Activated naive CD4-positive, alpha-beta T cell treated with anti-CD3 and anti-CD28 coated beads for 36 hours (primary cell): ENCODE measurements at regions of chr3 and their contacts with region 1.

Region 1: GRCh38 chr3:47420511-47421484 is 40.0 kb downstream of the PTPN23 start:
- DNase-seq: peak; percentile 98
- H3K4me3 Mint-ChIP-seq: peak overlapping the region; percentile 52
- H3K27ac Mint-ChIP-seq: peak overlapping the region; percentile 98
- H3K4me1 Mint-ChIP-seq: peaks cover 12% of the 10 kb centered on the region
- H3K27me3 Mint-ChIP-seq: no peaks in the 10 kb centered on the region

Region 2: GRCh38 chr3:46778101-46778500 is 642.7 kb before region 1 on chr3:
- CTCF ChIA-PET with region 1: no interaction called
- intact Hi-C with region 1: no loop called
- DNase-seq: no peak
- H3K4me3 Mint-ChIP-seq: no peak overlapping the region
- H3K27ac Mint-ChIP-seq: no peak overlapping the region
- H3K4me1 Mint-ChIP-seq: no peaks in the 10 kb centered on the region
- H3K27me3 Mint-ChIP-seq: peaks cover 3% of the 10 kb centered on the region

Region 3: DNA sequence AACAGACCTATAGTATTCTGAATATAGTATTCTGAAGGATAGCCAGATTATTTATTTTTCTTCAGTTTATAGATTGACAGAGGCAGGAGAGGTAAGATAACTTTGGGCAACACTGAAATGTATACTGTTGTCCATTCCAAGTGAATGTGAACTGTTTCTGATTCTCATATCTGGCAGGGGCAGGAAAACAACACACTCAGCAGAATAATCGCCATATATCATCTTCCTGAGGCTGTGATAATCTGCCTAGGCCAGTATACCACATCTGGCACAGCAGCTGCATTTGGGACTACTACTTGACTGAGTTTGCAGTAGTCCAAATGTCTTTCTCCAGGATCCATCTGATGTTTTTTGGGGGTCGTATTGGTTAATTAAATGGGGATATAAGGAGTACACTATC is 234.5 kb before region 1 on chr3:
- CTCF ChIA-PET with region 1: no interaction called
- intact Hi-C with region 1: no loop called
- DNase-seq: no peak
- H3K4me3 Mint-ChIP-seq: no peak overlapping the region
- H3K27ac Mint-ChIP-seq: no peak overlapping the region
- H3K4me1 Mint-ChIP-seq: no peaks in the 10 kb centered on the region
- H3K27me3 Mint-ChIP-seq: no peaks in the 10 kb centered on the region

Region 4: GRCh38 chr3:47380601-47381316 is 40.0 kb before region 1 on chr3 and contains the start of gene PTPN23:
- CTCF ChIA-PET with region 1: interaction called, 4 read pairs
- intact Hi-C with region 1: loop called (anchors 1 kb)
- DNase-seq: peak; percentile 99
- H3K4me3 Mint-ChIP-seq: peak within 1 kb of the TSS; percentile 100
- H3K27ac Mint-ChIP-seq: peak within 1 kb of the TSS; percentile 98
- H3K4me1 Mint-ChIP-seq: peaks cover 37% of the 10 kb centered on the region
- H3K27me3 Mint-ChIP-seq: no peaks in the 10 kb centered on the region
- total RNA-seq, gene PTPN23: 18.7 to 21.6 TPM

Region 5: GRCh38 chr3:47464588-47464987 is 43.8 kb after region 1 on chr3:
- CTCF ChIA-PET with region 1: interaction called, 4 read pairs
- intact Hi-C with region 1: loop called (anchors 2 kb)
- DNase-seq: no peak
- H3K4me3 Mint-ChIP-seq: no peak overlapping the region
- H3K27ac Mint-ChIP-seq: no peak overlapping the region
- H3K4me1 Mint-ChIP-seq: peaks cover 31% of the 10 kb centered on the region
- H3K27me3 Mint-ChIP-seq: no peaks in the 10 kb centered on the region

Region 6: GRCh38 chr3:47513125-47513929 is 92.5 kb after region 1 on chr3 and contains the start of gene ELP6:
- CTCF ChIA-PET with region 1: interaction called, 11 read pairs
- intact Hi-C with region 1: loop called (anchors 1 kb)
- DNase-seq: peak; percentile 98
- H3K4me3 Mint-ChIP-seq: peak within 1 kb of the TSS; percentile 96
- H3K27ac Mint-ChIP-seq: peak within 1 kb of the TSS; percentile 97
- H3K4me1 Mint-ChIP-seq: peaks cover 15% of the 10 kb centered on the region
- H3K27me3 Mint-ChIP-seq: no peaks in the 10 kb centered on the region
- total RNA-seq, gene ELP6: 32.7 to 33.1 TPM

Region 7: DNA sequence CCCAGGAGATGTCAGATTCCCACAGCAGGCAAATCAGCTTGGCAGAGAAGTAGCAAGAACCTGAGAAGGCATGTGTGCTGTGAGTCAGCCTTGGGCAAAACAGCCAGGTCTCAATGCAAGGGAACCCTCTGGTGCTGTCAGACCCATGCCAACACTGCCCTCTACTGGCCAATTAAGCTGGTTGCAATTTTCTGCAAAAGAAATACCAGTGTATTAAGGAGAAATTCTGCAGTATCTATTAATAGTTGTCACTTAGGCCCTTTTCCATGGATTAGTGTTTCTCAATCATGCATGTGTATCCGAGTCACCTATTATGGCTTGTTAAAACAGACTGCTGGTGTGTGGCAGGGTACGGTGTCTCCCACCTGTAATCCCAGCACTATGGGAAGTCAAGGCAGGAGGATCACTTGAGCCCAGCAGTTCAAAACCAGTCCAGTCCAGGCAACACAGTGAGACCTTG is 569.2 kb after region 1 on chr3:
- CTCF ChIA-PET with region 1: no interaction called
- intact Hi-C with region 1: loop called (anchors 10 kb)
- DNase-seq: peak; percentile 86
- H3K4me3 Mint-ChIP-seq: no peak overlapping the region
- H3K27ac Mint-ChIP-seq: no peak overlapping the region
- H3K4me1 Mint-ChIP-seq: peaks cover 4% of the 10 kb centered on the region
- H3K27me3 Mint-ChIP-seq: no peaks in the 10 kb centered on the region